ENCODE measurements at regions of chr12 and their contacts with region 1.

Region 1: DNA sequence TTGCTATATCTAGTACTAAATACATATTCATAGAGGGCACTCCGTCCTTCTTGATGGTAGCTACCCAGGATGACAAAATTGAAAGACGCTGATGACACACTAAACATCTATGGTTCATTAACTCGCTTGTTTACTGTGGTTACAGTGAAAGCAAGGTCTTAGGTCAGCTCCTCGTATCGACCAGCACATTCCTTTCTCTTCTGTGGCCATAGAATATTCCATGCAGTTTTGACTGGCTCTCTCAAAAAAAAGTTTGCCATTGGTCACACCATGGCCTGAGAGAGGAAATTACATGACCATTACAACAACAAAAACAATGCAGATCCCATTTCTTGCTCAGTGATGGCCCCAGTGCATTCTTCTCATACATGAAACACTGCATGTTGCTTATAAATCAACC is 411.4 kb upstream of the SOX5 start:
- DNase-seq: peak; percentile 25
- ATAC-seq: peak; percentile 65
- H3K4me3 ChIP-seq: peak overlapping the region in 3 of 5 experiments; percentile 3 to 34 (median 33)
- H3K4me3 Mint-ChIP-seq: peak overlapping the region; percentile 85
- H3K27ac ChIP-seq: peak overlapping the region; percentile 15 to 58
- H3K27ac Mint-ChIP-seq: peak overlapping the region; percentile 83
- H3K4me1 ChIP-seq: peaks cover 15 to 29% of the 10 kb centered on the region in 2 donors
- H3K4me1 Mint-ChIP-seq: peaks cover 45% of the 10 kb centered on the region
- H3K27me3 ChIP-seq: no peaks in the 10 kb centered on the region
- H3K27me3 Mint-ChIP-seq: no peaks in the 10 kb centered on the region
- CTCF ChIP-seq: no peak

Region 2: DNA sequence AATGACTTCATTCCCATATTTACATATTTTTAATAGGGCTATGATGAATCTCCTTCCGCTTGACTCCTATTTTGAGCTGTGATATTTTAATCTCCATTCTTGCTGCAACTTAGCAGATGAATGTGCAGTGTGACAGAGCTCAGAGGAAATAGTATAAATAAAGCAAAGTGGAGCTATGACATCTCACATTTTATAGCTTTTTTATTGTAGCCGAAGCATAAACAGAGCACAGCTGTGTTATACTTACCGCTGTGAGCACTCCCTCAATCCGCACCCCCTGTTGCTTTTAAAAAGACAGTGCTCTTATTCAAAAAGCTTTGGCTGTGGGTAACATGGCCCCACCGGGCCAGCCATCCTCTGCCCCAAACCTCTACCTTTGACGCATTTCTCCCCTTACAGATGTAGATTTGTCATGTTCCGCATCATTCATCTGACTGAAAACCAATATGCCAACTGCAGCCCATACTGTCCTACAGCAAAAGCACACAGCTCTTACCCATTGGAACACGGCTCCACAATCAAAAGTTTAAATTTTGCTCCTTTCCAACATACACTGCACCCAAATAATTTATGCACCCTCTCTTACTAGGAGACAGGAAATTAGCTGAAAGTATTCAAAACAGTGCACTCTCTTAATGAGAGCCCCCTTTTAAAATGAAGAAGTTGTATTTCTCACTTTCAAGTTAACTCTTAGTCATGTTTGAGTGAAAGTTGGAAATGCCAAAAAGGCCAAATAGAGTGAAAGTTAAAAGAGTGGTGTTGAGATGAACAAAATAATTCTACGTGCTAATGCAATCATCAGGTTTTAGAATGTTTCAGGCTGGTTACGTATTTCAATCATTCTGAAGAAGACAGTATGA is 17.9 kb after region 1 on chr12:
- CTCF ChIA-PET with region 1: interaction called, 20 read pairs
- POLR2A ChIA-PET with region 1: interaction called, 4 read pairs
- intact Hi-C with region 1: no loop called
- DNase-seq: peak; percentile 54
- ATAC-seq: peak; percentile 77
- H3K4me3 ChIP-seq: peak overlapping the region in 4 of 5 experiments; percentile 3 to 65 (median 34)
- H3K4me3 Mint-ChIP-seq: peak overlapping the region; percentile 82
- H3K27ac ChIP-seq: peak overlapping the region; percentile 56 to 58
- H3K27ac Mint-ChIP-seq: peak overlapping the region; percentile 93
- H3K4me1 ChIP-seq: peaks cover 23 to 24% of the 10 kb centered on the region in 2 donors
- H3K4me1 Mint-ChIP-seq: peaks cover 32% of the 10 kb centered on the region
- H3K27me3 ChIP-seq: no peaks in the 10 kb centered on the region
- H3K27me3 Mint-ChIP-seq: no peaks in the 10 kb centered on the region
- CTCF ChIP-seq: no peak

Region 3: GRCh38 chr12:24416423-24417109 is 55.7 kb after region 1 on chr12:
- CTCF ChIA-PET with region 1: interaction called, 3 read pairs
- POLR2A ChIA-PET with region 1: no interaction called
- intact Hi-C with region 1: loop called (anchors 2 kb)
- DNase-seq: peak; percentile 51
- ATAC-seq: peak; percentile 75
- H3K4me3 ChIP-seq: peak overlapping the region in 1 of 5 experiments; percentile 42
- H3K4me3 Mint-ChIP-seq: peak overlapping the region; percentile 64
- H3K27ac ChIP-seq: peak overlapping the region; percentile 56 to 62
- H3K27ac Mint-ChIP-seq: peak overlapping the region; percentile 67
- H3K4me1 ChIP-seq: peaks cover 34 to 36% of the 10 kb centered on the region in 2 donors
- H3K4me1 Mint-ChIP-seq: peaks cover 37% of the 10 kb centered on the region
- H3K27me3 ChIP-seq: no peaks in the 10 kb centered on the region
- H3K27me3 Mint-ChIP-seq: no peaks in the 10 kb centered on the region
- CTCF ChIP-seq: no peak

Region 4: GRCh38 chr12:24561882-24562760 is 201.2 kb after region 1 on chr12:
- CTCF ChIA-PET with region 1: no interaction called
- POLR2A ChIA-PET with region 1: no interaction called
- intact Hi-C with region 1: loop called (anchors 5 kb)
- DNase-seq: peak; percentile 68
- ATAC-seq: peak; percentile 51
- H3K4me3 ChIP-seq: peak overlapping the region; percentile 71 to 80 (median 78)
- H3K4me3 Mint-ChIP-seq: peak overlapping the region; percentile 91
- H3K27ac ChIP-seq: peak overlapping the region in 1 of 2 donors; percentile 59
- H3K27ac Mint-ChIP-seq: peak overlapping the region; percentile 69
- H3K4me1 ChIP-seq: peaks cover 15 to 18% of the 10 kb centered on the region in 2 donors
- H3K4me1 Mint-ChIP-seq: peaks cover 22% of the 10 kb centered on the region
- H3K27me3 ChIP-seq: peaks cover 0 to 23% (median 18%) of the 10 kb centered on the region in 4 experiments
- H3K27me3 Mint-ChIP-seq: peaks cover 23% of the 10 kb centered on the region
- CTCF ChIP-seq: no peak

Region 5: GRCh38 chr12:24596768-24597388 is 236.0 kb after region 1 on chr12:
- CTCF ChIA-PET with region 1: interaction called, 5 read pairs
- POLR2A ChIA-PET with region 1: no interaction called
- intact Hi-C with region 1: loop called (anchors 5 kb)
- DNase-seq: peak; percentile 26
- ATAC-seq: no peak
- H3K4me3 ChIP-seq: no peak overlapping the region
- H3K4me3 Mint-ChIP-seq: no peak overlapping the region
- H3K27ac ChIP-seq: no peak overlapping the region
- H3K27ac Mint-ChIP-seq: no peak overlapping the region
- H3K4me1 ChIP-seq: peaks cover 23 to 24% of the 10 kb centered on the region in 2 donors
- H3K4me1 Mint-ChIP-seq: peaks cover 30% of the 10 kb centered on the region
- H3K27me3 ChIP-seq: no peaks in the 10 kb centered on the region
- H3K27me3 Mint-ChIP-seq: no peaks in the 10 kb centered on the region
- CTCF ChIP-seq: peak; percentile 74

Region 6: DNA sequence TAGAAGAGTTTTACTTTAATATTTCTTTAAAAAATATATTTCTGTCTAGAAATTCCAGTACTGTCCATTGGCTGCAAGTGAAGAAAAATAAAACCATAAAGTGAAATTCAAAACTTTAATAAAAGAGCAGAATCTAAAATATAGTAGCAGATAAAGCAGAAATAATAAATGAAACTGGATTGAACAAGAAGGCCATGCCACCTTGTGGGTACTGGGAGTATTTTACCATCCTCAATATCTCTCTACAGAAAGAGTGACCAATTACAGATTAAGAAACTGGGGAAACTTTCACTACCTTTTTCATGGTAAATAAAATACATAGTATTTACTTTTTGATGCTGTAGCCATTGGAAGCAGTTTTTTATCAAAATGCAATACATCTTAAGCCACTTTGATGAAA is 367.5 kb after region 1 on chr12:
- CTCF ChIA-PET with region 1: interaction called, 7 read pairs
- POLR2A ChIA-PET with region 1: no interaction called
- intact Hi-C with region 1: loop called (anchors 2 kb)
- DNase-seq: peak; percentile 50
- ATAC-seq: no peak
- H3K4me3 ChIP-seq: no peak overlapping the region
- H3K4me3 Mint-ChIP-seq: peak overlapping the region; percentile 17
- H3K27ac ChIP-seq: no peak overlapping the region
- H3K27ac Mint-ChIP-seq: no peak overlapping the region
- H3K4me1 ChIP-seq: peaks cover 22 to 23% of the 10 kb centered on the region in 2 donors
- H3K4me1 Mint-ChIP-seq: peaks cover 57% of the 10 kb centered on the region
- H3K27me3 ChIP-seq: no peaks in the 10 kb centered on the region
- H3K27me3 Mint-ChIP-seq: no peaks in the 10 kb centered on the region
- CTCF ChIP-seq: peak; percentile 76

Region 7: GRCh38 chr12:24838531-24838950 is 477.6 kb after region 1 on chr12:
- CTCF ChIA-PET with region 1: interaction called, 15 read pairs
- POLR2A ChIA-PET with region 1: no interaction called
- intact Hi-C with region 1: no loop called
- DNase-seq: peak; percentile 4
- ATAC-seq: no peak
- H3K4me3 ChIP-seq: no peak overlapping the region
- H3K4me3 Mint-ChIP-seq: no peak overlapping the region
- H3K27ac ChIP-seq: no peak overlapping the region
- H3K27ac Mint-ChIP-seq: no peak overlapping the region
- H3K4me1 ChIP-seq: peaks cover 0 to 13% of the 10 kb centered on the region in 2 donors
- H3K4me1 Mint-ChIP-seq: peaks cover 13% of the 10 kb centered on the region
- H3K27me3 ChIP-seq: no peaks in the 10 kb centered on the region
- H3K27me3 Mint-ChIP-seq: no peaks in the 10 kb centered on the region
- CTCF ChIP-seq: no peak

Measured in B cell (primary cell).